ENCODE measurements at regions of chr14 and their contacts with region 1.

Region 1: DNA sequence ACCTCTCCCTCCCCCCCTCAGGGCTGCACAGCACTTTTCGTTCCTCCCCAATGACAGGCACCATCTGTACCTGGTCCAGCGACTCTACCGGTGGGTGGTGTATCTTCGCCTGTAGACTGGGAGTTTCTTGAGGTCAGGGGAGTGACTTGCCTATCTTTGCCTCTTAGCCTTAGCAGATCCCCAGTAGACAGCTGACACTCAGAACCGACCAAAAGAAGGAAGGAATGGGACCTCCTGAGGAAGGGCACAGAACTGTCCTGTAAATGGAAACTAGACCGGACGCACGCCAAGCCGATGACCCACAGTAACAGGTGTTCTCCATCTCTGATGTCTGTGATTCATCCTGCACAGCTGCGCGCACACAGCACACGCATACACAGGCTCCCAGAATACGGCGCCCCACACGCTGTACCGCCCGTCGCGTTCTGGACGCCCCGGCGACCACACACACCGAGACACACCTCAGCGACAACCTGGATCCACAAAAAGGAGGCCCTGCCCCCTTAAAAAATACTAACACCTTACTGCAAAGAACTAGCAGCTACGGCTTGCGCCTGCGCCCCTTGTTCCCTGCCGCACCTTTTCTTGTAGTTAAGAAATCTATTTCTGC is 673 bp upstream of the TTC9 start:
- DNase-seq: peak in 2 of 3 donors; percentile 66 to 75
- H3K4me3 ChIP-seq: peak overlapping the region; percentile 77 to 98 (median 89)
- H3K27ac ChIP-seq: no peak overlapping the region
- H3K4me1 ChIP-seq: peaks cover 11 to 44% (median 31%) of the 10 kb centered on the region in 4 experiments
- H3K27me3 ChIP-seq: no peaks in the 10 kb centered on the region

Region 2: GRCh38 chr14:70527501-70528105 is 113.4 kb before region 1 on chr14:
- CTCF ChIA-PET with region 1: no interaction called
- POLR2A ChIA-PET with region 1: no interaction called
- DNase-seq: peak in 2 of 3 donors; percentile 56 to 75
- H3K4me3 ChIP-seq: no peak overlapping the region
- H3K27ac ChIP-seq: no peak overlapping the region
- H3K4me1 ChIP-seq: no peaks in the 10 kb centered on the region
- H3K27me3 ChIP-seq: no peaks in the 10 kb centered on the region

Region 3: GRCh38 chr14:70600382-70601157 is 40.5 kb before region 1 on chr14 and contains the start of gene MED6:
- CTCF ChIA-PET with region 1: no interaction called
- POLR2A ChIA-PET with region 1: no interaction called
- DNase-seq: peak; percentile 91 to 96 (median 96)
- H3K4me3 ChIP-seq: peak within 1 kb of the TSS; percentile 31 to 100 (median 93)
- H3K27ac ChIP-seq: peak within 1 kb of the TSS; percentile 90 to 96
- H3K4me1 ChIP-seq: peaks cover 4 to 20% (median 13%) of the 10 kb centered on the region in 4 experiments
- H3K27me3 ChIP-seq: peaks cover 0 to 13% (median 4%) of the 10 kb centered on the region in 5 experiments

Region 4: GRCh38 chr14:70616646-70617045 is 24.4 kb before region 1 on chr14:
- CTCF ChIA-PET with region 1: no interaction called
- POLR2A ChIA-PET with region 1: no interaction called
- DNase-seq: no peak
- H3K4me3 ChIP-seq: no peak overlapping the region
- H3K27ac ChIP-seq: no peak overlapping the region
- H3K4me1 ChIP-seq: no peaks in the 10 kb centered on the region
- H3K27me3 ChIP-seq: peaks cover 0 to 4% (median 0%) of the 10 kb centered on the region in 5 experiments

Region 5: DNA sequence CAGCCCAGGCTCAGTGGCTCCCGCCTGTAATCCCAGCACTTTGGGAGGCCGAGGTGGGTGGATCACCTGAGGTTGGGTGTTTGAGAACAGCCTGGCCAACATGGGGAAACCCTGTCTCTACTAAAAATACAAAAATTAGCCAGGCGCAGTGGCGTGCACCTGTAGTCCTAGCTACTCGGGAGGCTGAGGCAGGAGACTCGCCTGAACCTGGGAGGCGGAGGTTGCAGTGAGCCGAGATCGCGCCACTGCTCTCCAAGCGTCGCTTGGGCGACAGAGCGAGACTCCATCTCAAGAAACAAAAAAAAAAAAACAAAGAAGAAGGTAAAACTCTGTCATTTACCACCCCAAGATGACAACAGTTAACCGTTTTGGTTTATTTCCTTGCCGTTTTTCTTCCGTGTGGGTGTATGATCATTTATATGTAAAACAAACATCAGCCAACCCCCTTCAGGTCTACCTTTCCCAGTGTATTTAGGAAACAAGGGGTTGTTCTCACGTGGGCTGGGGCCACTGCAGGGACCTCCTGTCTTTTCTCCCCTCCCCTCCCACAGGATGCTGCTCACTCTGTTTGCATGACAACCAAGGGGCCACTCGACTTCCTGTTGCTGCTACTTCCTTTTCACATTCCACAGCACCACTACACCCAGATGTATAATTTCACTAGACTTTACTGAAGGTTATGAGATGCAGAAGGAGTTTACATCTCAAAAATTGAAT is 14.2 kb after region 1 on chr14:
- CTCF ChIA-PET with region 1: interaction called, 13 read pairs
- POLR2A ChIA-PET with region 1: interaction called, 3 read pairs
- DNase-seq: peak; percentile 87 to 96 (median 94)
- H3K4me3 ChIP-seq: peak overlapping the region in 5 of 7 experiments; percentile 15 to 65 (median 52)
- H3K27ac ChIP-seq: peak overlapping the region; percentile 82 to 95
- H3K4me1 ChIP-seq: peaks cover 42 to 74% (median 64%) of the 10 kb centered on the region in 4 experiments
- H3K27me3 ChIP-seq: no peaks in the 10 kb centered on the region

Measured in common myeloid progenitor, CD34-positive (primary cell).